ENCODE measurements at regions of chr11 and their contacts with region 1.

Region 1: GRCh38 chr11:35822815-35823495 is 120.9 kb upstream of the LDLRAD3 start:
- DNase-seq: no peak
- ATAC-seq: no peak
- H3K4me3 ChIP-seq: no peak overlapping the region
- H3K27ac ChIP-seq: no peak overlapping the region; the same call in 1 of the 2 replicates
- H3K4me1 ChIP-seq: peaks cover 7% of the 10 kb centered on the region
- H3K27me3 ChIP-seq: no peaks in the 10 kb centered on the region
- CTCF ChIP-seq: no peak

Region 2: GRCh38 chr11:35427071-35427470 is 395.9 kb before region 1 on chr11:
- CTCF ChIA-PET with region 1: interaction called, 13 read pairs
- POLR2A ChIA-PET with region 1: no interaction called
- in situ Hi-C with region 1: no loop called
- intact Hi-C with region 1: no loop called
- DNase-seq: no peak
- ATAC-seq: no peak
- H3K4me3 ChIP-seq: no peak overlapping the region
- H3K27ac ChIP-seq: no peak overlapping the region
- H3K4me1 ChIP-seq: no peaks in the 10 kb centered on the region
- H3K27me3 ChIP-seq: peaks cover 63% of the 10 kb centered on the region
- CTCF ChIP-seq: no peak

Region 3: GRCh38 chr11:35714882-35715627 is 107.9 kb before region 1 on chr11:
- CTCF ChIA-PET with region 1: interaction called, 11 read pairs
- POLR2A ChIA-PET with region 1: no interaction called
- in situ Hi-C with region 1: no loop called
- intact Hi-C with region 1: no loop called
- DNase-seq: no peak
- ATAC-seq: no peak
- H3K4me3 ChIP-seq: no peak overlapping the region
- H3K27ac ChIP-seq: no peak overlapping the region
- H3K4me1 ChIP-seq: no peaks in the 10 kb centered on the region
- H3K27me3 ChIP-seq: no peaks in the 10 kb centered on the region
- CTCF ChIP-seq: no peak

Region 4: GRCh38 chr11:35838071-35838470 is 15.1 kb after region 1 on chr11:
- CTCF ChIA-PET with region 1: interaction called, 22 read pairs
- POLR2A ChIA-PET with region 1: no interaction called
- in situ Hi-C with region 1: no loop called
- intact Hi-C with region 1: no loop called
- DNase-seq: no peak
- ATAC-seq: no peak
- H3K4me3 ChIP-seq: no peak overlapping the region
- H3K27ac ChIP-seq: no peak overlapping the region
- H3K4me1 ChIP-seq: no peaks in the 10 kb centered on the region
- H3K27me3 ChIP-seq: no peaks in the 10 kb centered on the region
- CTCF ChIP-seq: no peak

Region 5: DNA sequence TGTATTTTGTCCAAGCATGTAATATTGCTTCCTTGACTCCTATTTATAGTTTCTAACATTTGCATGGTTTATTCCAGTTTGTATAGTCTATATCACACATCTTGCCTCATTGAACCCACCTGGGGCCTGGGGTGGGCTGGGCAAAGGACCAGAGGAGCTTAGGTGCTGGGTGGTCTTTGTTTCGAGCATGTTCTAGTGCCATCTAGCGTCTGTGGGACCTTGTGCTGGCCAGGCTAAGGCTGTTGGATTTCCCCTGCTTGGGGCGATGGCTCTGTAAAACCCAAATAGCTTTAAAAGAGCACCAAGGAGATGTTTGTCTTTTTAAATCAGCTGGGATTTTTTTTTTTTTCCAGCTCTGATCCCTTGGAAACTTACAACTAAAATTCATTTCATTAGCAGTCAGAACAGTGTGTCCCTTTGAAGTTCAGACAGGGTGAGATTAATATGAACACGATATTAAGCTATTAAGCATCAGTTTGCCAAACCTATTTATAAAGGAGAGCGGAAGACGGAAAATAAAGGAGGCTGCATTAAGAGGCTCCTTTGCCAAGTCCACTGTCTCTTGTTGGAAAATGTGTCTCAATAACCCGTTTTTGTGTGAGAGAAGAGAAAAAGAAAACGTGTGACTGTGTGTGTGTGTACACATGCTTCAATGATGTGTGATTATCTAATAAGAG is 308.9 kb after region 1 on chr11:
- CTCF ChIA-PET with region 1: interaction called, 36 read pairs
- POLR2A ChIA-PET with region 1: no interaction called
- in situ Hi-C with region 1: no loop called
- intact Hi-C with region 1: loop called (anchors 10 kb)
- DNase-seq: no peak
- ATAC-seq: peak; percentile 93
- H3K4me3 ChIP-seq: no peak overlapping the region
- H3K27ac ChIP-seq: peak overlapping the region; percentile 58; the same call in 1 of the 2 replicates
- H3K4me1 ChIP-seq: peaks cover 4% of the 10 kb centered on the region; the same call in 1 of the 2 replicates
- H3K27me3 ChIP-seq: no peaks in the 10 kb centered on the region
- CTCF ChIP-seq: peak; percentile 87

Region 6: DNA sequence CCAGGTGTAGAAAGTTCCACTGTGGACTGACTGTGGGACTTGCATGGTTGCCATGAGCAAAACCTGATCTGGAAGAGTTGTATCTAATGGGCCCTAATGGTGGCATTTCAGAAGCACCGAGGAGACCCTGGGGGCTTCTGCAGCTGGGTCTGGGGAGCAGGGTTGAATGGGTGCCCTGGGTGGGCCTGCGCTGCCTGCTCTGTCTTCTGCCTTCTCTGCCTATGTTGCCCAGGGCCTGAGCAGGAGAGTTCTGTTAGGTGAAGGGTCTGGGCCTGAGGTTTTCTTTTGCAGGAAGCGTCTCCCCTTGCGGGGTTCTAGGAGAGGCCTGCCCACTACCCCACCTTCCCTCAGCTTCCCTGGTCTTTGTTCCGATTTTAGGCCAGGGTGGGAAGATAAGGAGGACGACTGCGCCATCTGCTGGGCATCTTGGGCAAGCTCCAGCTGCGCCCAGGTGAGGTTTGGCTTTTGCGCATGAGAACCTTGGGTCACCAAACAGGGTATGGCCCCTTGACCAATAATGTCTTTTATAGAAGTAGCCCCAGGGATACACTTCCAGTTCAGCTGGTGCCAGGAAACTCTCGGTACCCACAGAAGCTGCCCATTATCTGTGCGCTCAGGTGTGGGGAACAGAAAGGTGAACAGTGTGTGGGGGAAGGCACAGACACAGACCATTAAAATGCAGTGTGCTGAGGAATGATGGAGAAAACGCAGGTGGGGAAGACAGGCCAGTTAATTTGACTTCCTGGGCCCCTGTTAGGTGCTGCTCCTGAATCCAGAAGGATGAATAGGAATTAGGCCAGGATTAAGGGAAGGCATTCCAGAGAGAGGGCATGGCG is 443.1 kb after region 1 on chr11:
- CTCF ChIA-PET with region 1: interaction called, 7 read pairs
- POLR2A ChIA-PET with region 1: interaction called, 9 read pairs
- in situ Hi-C with region 1: no loop called
- intact Hi-C with region 1: loop called (anchors 1 kb)
- DNase-seq: no peak
- ATAC-seq: peak; percentile 87
- H3K4me3 ChIP-seq: no peak overlapping the region
- H3K27ac ChIP-seq: no peak overlapping the region
- H3K4me1 ChIP-seq: no peaks in the 10 kb centered on the region
- H3K27me3 ChIP-seq: no peaks in the 10 kb centered on the region
- CTCF ChIP-seq: peak; percentile 90

Measured in Panc1 (cell line).